AG04449 (cell line): ENCODE measurements at regions of chr2 and their contacts with region 1.

Region 1: DNA sequence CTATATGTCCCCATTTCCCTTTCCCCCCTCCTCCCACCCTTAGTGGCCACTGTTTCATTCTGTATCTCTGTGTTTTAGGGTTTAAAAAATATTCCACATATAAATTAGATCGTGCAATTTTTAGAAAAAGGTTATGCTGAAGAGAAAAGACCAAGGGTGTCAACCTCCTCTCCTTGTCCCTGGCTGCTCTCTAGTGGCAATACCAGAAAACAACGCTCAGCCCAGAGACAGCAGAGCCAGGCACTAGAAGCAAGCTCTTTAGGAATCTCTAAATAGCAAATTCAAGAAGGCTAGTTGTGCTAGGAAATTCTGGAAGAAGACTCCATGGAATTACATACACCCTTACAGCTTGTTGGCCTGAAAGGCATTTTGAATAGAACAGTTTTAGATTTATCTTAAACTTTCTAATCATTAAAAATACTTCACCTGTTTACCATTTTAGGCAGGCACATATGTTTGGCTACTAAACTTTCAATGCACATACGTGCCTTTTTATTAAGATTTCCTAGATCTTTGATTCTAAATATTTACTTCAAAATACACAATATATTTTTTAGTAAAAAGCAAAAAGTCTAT is 35.1 kb upstream of the RASGRP3 start:
- DNase-seq: no peak
- H3K4me3 ChIP-seq: no peak overlapping the region
- CTCF ChIP-seq: peak; percentile 80

Region 2: GRCh38 chr2:33395655-33396249 is 45.6 kb before region 1 on chr2:
- CTCF ChIA-PET with region 1: interaction called, 14 read pairs
- POLR2A ChIA-PET with region 1: no interaction called
- DNase-seq: no peak
- H3K4me3 ChIP-seq: no peak overlapping the region
- CTCF ChIP-seq: peak; percentile 52

Region 3: GRCh38 chr2:33412920-33413319 is 28.4 kb before region 1 on chr2:
- CTCF ChIA-PET with region 1: interaction called, 36 read pairs
- POLR2A ChIA-PET with region 1: no interaction called
- DNase-seq: no peak
- H3K4me3 ChIP-seq: no peak overlapping the region
- CTCF ChIP-seq: peak; percentile 38

Region 4: DNA sequence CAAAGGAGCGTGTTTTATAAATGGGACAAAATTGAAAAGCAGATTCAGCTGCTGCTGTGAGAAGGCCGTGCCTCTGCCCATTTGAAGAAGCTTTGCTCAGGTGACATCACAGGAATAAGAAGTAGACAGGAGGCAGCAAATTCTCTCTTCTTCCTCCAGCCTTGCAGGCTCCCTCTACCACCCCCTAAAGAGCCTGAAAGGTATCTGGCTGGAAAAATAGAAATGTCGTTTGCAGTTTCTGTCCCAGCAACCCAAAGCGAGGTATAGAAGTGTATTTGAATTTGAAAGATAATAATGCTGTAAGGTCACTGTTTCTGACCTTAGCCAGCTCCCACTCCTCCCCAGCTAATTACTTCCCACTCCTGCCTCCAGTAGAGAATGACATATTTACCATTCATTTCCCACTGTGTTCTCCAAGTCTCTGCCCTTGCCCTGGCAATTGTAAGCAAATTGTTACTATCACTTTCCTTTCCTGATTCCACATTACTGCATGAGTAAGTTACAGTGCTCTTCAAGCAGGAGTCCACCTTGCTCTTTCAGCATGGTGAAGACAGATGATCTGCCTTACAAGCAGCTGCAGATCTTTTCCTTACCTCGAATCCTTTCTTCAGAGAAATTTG is 21.6 kb before region 1 on chr2:
- CTCF ChIA-PET with region 1: interaction called, 12 read pairs
- POLR2A ChIA-PET with region 1: no interaction called
- DNase-seq: no peak
- H3K4me3 ChIP-seq: no peak overlapping the region
- CTCF ChIP-seq: no peak

Region 5: DNA sequence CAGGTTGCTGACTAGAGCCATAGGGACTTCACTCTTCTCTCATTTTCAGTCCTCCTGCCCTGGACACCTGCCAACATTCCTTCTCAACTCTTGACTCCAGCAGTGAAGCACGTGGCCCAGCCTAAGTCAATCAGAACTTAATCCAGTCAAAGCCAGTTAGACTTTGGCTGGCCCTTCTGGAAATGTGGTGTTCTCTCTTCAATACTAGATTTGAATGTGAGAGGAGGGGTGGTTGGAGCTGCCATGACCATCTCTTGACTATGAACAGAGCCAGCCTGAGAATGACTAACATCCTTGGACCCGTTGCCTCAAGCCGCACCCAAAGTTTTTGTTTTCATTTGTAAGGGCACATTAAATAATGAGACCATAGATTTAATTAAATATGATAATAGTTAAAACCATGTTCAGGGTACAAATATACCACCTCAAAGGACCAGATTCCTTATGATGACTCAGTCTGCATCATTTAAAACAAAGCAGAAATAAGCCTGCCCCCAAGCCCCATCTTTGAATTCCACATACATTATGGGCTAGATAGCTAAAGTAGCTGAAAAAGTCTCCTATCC is 14.6 kb before region 1 on chr2:
- CTCF ChIA-PET with region 1: interaction called, 15 read pairs
- POLR2A ChIA-PET with region 1: interaction called, 6 read pairs
- DNase-seq: no peak
- H3K4me3 ChIP-seq: no peak overlapping the region
- CTCF ChIP-seq: no peak

Region 6: GRCh38 chr2:33681369-33681757 is 240.0 kb after region 1 on chr2:
- CTCF ChIA-PET with region 1: no interaction called
- POLR2A ChIA-PET with region 1: no interaction called
- DNase-seq: no peak
- H3K4me3 ChIP-seq: no peak overlapping the region
- CTCF ChIP-seq: no peak

Region 7: DNA sequence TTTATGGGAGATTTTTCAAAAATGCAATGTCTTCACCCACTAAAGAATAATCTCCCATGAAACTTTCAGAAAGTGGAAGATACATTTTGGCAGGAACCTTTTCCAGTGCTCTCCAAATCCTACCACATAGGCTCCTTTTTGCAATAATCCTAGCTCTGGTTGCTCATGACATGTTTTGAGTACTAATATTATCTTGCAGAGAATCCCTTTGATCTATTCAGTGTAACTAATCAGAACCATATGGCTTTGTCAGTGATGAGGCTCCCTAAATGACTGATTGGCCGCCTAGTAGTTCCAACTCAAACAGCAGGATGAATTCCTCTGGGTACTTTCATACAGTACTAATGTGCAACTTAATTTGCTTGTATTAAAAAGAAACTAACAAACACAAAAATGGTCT is 701.8 kb after region 1 on chr2:
- CTCF ChIA-PET with region 1: no interaction called
- POLR2A ChIA-PET with region 1: no interaction called
- DNase-seq: no peak
- H3K4me3 ChIP-seq: no peak overlapping the region
- CTCF ChIP-seq: no peak